HEK293T (cell line): ENCODE measurements at regions of chr19 and their contacts with region 1.

Region 1: GRCh38 chr19:17605761-17606745 is 50.6 kb downstream of the COLGALT1 start:
- DNase-seq: peak; percentile 93

Region 2: GRCh38 chr19:17522988-17523872 is 82.8 kb before region 1 on chr19:
- CTCF ChIA-PET with region 1: no interaction called
- POLR2A ChIA-PET with region 1: no interaction called
- DNase-seq: no peak

Region 3: GRCh38 chr19:17579661-17580244 is 26.3 kb before region 1 on chr19:
- CTCF ChIA-PET with region 1: interaction called, 6 read pairs
- POLR2A ChIA-PET with region 1: interaction called, 10 read pairs
- DNase-seq: peak; percentile 89

Region 4: GRCh38 chr19:17620696-17621095 is 14.6 kb after region 1 on chr19:
- CTCF ChIA-PET with region 1: interaction called, 3 read pairs
- POLR2A ChIA-PET with region 1: interaction called, 10 read pairs
- DNase-seq: no peak